GM10248 (cell line): ENCODE measurements at regions of chr7 and their contacts with region 1.

Region 1: GRCh38 chr7:17318146-17318545 is 19.7 kb downstream of the AHR start:
- DNase-seq: no peak
- CTCF ChIP-seq: no peak

Region 2: DNA sequence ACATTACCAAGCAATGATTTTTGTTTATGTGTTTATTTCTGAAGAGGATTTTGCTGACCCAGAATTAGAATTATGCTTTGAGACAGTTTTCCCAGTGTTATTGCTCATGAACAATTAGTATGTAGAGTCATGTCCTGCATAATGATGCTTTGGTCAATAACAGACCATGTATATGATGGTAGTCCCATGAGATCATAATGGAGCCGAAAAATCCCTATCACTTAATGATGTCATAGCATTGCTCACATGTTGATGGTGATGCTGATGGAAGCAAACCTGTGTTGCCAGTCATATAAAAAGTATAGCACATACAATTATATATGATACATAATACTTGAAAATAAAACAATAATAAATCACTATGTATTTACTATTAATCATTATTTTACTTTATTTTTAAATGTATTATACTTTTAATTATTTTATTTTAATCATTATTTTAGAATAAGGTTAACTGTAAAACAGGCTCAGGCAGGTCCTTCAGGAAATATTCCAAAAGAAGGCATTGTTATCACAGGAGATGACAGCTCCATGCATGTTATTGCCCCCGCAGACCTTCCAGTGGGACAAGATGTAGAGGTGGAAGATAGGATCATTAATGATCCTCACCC is 13.8 kb after region 1 on chr7:
- CTCF ChIA-PET with region 1: interaction called, 20 read pairs
- POLR2A ChIA-PET with region 1: no interaction called
- DNase-seq: no peak
- CTCF ChIP-seq: no peak